Activated CD4-positive, alpha-beta T cell treated with anti-CD3 and anti-CD28 coated beads for 36 hours (primary cell): ENCODE measurements at regions of chr5 and their contacts with region 1.

Region 1: DNA sequence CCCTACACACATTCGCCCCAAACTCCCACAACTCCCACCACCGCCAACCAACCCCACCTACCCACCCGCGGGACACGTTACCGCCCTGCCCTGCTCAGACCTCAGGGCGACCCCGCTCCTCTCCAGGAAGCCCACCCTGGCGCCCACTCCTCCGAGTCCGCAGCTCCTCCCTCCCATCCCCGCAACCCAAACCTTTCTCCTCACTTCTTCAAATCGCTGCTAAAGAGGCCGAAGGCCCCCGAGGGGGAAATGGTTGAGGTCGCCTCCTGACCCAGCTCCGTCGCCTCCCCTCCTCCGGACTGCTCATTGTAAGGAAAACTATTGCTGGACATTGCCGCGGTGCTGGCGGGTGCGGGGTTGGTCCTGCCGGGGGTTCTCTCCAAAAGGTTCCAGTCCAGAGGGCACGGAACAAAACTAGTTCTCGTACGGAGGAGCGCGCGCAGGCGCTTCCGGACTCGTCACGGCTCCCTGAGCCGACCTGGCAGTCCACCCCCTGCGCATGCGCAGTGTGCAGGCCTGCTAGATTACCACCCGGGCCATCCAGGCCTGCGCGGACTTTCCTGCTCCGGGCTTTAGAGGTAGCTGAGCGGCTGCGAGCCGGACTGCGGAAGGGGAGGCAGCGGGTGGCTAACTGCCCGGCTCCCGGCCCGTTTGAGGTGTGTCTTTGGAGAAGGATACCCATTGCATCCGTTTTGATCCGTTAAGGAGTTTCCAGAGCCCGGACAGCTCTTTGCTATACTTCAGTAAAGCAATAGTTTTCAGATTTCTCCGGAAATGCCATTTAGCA is at the start of gene AP3B1:
- DNase-seq: peak; percentile 99
- ATAC-seq: peak; percentile 94
- H3K4me3 Mint-ChIP-seq: peak within 1 kb of the TSS; percentile 88
- H3K27ac Mint-ChIP-seq: peak within 1 kb of the TSS; percentile 99
- H3K4me1 Mint-ChIP-seq: peaks cover 33% of the 10 kb centered on the region
- H3K27me3 Mint-ChIP-seq: no peaks in the 10 kb centered on the region
- total RNA-seq, gene AP3B1: 41.2 to 55.7 TPM

Region 2: GRCh38 chr5:77697692-77698091 is 596.7 kb before region 1 on chr5:
- CTCF ChIA-PET with region 1: no interaction called
- POLR2A ChIA-PET with region 1: no interaction called
- intact Hi-C with region 1: loop called in 1 of 2 experiments (anchors 10 kb)
- DNase-seq: no peak
- ATAC-seq: no peak
- H3K4me3 Mint-ChIP-seq: no peak overlapping the region
- H3K27ac Mint-ChIP-seq: no peak overlapping the region
- H3K4me1 Mint-ChIP-seq: peaks cover 26% of the 10 kb centered on the region
- H3K27me3 Mint-ChIP-seq: no peaks in the 10 kb centered on the region

Region 3: DNA sequence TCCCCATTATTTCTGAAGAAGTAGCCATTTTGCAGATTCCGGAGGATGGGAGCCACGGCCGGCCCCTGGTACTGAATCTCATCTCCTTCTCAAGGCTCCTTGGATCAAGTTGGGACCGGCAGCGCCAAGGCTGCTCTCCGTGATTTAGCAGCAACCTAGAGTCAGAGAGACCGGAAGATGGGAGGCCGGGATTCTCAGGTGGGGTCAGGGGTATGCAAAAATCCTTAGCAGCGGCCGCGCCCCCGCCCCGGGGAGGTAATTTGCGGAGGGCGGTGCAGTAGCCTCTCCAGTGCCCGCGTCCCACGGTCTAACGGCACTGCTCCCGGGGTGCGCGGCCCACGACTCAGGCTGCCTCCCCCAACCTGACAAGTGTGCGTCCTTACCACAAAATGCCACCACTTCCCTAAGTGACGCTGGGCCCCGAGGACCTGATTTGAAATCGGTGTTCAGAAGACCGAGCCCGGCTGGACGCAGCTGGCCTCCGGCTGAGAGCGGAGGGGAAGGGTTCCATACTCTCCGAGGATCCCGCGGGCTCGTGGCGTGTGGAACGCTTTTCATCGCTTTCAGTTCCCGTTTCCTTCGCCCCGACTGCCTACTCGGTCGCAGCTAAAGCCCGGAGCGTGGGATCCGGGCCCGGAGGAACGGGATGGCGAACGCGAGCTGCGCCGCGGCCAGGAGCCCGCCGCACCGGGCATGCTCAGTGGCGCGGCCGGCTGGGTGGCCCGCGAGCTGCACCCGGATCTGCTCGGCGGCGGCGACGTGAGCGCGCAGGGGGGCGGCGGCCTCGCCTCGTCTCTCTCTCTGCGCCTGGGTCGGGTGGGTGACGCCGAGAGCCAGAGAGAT is 65.6 kb after region 1 on chr5 and contains the start of gene SCAMP1:
- CTCF ChIA-PET with region 1: interaction called, 17 read pairs
- POLR2A ChIA-PET with region 1: interaction called, 23 read pairs
- intact Hi-C with region 1: loop called (anchors 1 kb)
- DNase-seq: peak; percentile 95
- ATAC-seq: peak; percentile 94
- H3K4me3 Mint-ChIP-seq: peak within 1 kb of the TSS; percentile 94
- H3K27ac Mint-ChIP-seq: peak within 1 kb of the TSS; percentile 97
- H3K4me1 Mint-ChIP-seq: peaks cover 35% of the 10 kb centered on the region
- H3K27me3 Mint-ChIP-seq: no peaks in the 10 kb centered on the region
- total RNA-seq, gene SCAMP1: 15.5 to 24.1 TPM